ENCODE measurements at regions of chr1 and their contacts with region 1.

Region 1: GRCh38 chr1:184792450-184792969 is 37.9 kb upstream of the EDEM3 start:
- DNase-seq: no peak
- ATAC-seq: peak; percentile 77
- H3K4me3 Mint-ChIP-seq: no peak overlapping the region
- H3K27ac Mint-ChIP-seq: peak overlapping the region; percentile 55
- H3K4me1 Mint-ChIP-seq: peaks cover 19% of the 10 kb centered on the region
- H3K27me3 Mint-ChIP-seq: no peaks in the 10 kb centered on the region

Region 2: GRCh38 chr1:184982002-184982954 is 189.8 kb after region 1 on chr1:
- CTCF ChIA-PET with region 1: interaction called, 11 read pairs
- DNase-seq: peak; percentile 85
- ATAC-seq: peak; percentile 99
- H3K4me3 Mint-ChIP-seq: no peak overlapping the region
- H3K27ac Mint-ChIP-seq: no peak overlapping the region
- H3K4me1 Mint-ChIP-seq: peaks cover 7% of the 10 kb centered on the region
- H3K27me3 Mint-ChIP-seq: peaks cover 15% of the 10 kb centered on the region

Measured in activated CD8-positive, alpha-beta memory T cell treated with anti-CD3 and anti-CD28 coated beads, Interleukin-2, amount 10 ng/mL, durations not matched to agents 7 days and 5 days (primary cell).